A549 (cell line): ENCODE measurements at regions of chr16 and their contacts with region 1.

Region 1: GRCh38 chr16:66954097-66954659 is 6.9 kb upstream of the CES3 start:
- DNase-seq: peak; percentile 81 to 90
- ATAC-seq: peak; percentile 93 to 96
- H3K4me3 ChIP-seq: no peak overlapping the region
- H3K27ac ChIP-seq: peak overlapping the region; percentile 26 to 38; a peak in 3 of 6 replicates
- H3K4me1 ChIP-seq: peaks cover 8% of the 10 kb centered on the region; the same call in 2 of the 3 replicates
- CTCF ChIP-seq: peak; percentile 89
- EP300 ChIP-seq: no peak
- POLR2A ChIP-seq: no peak
- RAD21 ChIP-seq: peak; percentile 89 to 90

Region 2: GRCh38 chr16:66940226-66940625 is 14.0 kb before region 1 on chr16:
- CTCF ChIA-PET with region 1: interaction called, 20 read pairs
- POLR2A ChIA-PET with region 1: interaction called, 3 read pairs
- DNase-seq: no peak
- ATAC-seq: no peak
- H3K4me3 ChIP-seq: no peak overlapping the region
- H3K27ac ChIP-seq: no peak overlapping the region
- H3K4me1 ChIP-seq: peaks cover 12% of the 10 kb centered on the region; the same call in 2 of the 3 replicates
- CTCF ChIP-seq: no peak
- EP300 ChIP-seq: no peak
- POLR2A ChIP-seq: no peak
- RAD21 ChIP-seq: no peak

Region 3: DNA sequence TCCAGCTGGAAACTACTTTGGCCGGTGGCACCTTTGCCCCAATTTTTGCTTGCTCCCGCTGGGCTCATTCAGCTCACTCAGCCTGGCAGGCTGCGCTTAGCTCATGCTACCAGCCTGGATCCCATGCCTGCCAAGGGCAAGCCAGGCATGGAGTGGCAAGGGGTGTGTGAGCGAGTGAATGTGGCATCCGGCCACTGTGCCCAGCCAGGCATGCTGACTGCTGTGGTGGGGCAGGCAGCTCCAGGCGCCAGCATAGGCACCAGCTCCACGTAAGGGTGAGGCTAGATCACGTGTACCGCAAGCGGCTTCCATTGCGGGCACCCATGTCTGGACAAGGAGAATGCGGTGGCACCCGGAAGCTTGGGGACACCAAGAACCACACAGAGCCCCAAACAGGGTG is 187.2 kb after region 1 on chr16:
- CTCF ChIA-PET with region 1: interaction called, 11 read pairs
- POLR2A ChIA-PET with region 1: no interaction called
- DNase-seq: no peak
- ATAC-seq: no peak
- H3K4me3 ChIP-seq: no peak overlapping the region
- H3K27ac ChIP-seq: no peak overlapping the region
- H3K4me1 ChIP-seq: no peaks in the 10 kb centered on the region
- CTCF ChIP-seq: no peak
- EP300 ChIP-seq: no peak
- POLR2A ChIP-seq: no peak
- RAD21 ChIP-seq: no peak

Region 4: DNA sequence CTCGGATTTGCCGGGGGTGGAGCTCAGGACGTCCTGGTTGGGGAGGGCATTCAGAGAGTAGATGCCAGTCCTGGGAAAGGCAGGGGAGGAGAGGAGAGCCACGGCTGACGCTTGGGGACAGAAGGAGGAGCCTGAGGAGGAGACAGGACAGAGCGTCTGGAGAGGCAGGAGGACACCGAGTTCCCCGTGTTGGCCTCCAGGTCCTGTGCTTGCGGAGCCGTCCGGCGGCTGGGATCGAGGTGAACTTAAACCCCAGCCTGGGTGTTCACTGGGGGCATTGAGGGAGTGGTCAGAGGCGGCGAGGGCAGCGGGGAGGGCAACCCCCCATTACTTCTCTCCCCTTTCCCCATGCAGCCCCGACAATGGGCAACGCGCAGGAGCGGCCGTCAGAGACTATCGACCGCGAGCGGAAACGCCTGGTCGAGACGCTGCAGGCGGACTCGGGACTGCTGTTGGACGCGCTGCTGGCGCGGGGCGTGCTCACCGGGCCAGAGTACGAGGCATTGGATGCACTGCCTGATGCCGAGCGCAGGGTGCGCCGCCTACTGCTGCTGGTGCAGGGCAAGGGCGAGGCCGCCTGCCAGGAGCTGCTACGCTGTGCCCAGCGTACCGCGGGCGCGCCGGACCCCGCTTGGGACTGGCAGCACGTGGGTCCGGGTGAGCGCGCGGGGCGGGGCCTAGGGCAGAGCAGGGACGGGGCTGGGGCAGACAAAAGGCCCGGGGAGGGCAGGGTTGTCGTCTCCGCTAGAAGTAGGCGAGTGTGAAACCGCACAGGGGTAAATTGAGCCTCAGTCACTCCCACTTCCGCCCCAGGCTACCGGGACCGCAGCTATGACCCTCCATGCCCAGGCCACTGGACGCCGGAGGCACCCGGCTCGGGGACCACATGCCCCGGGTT is 219.9 kb after region 1 on chr16:
- CTCF ChIA-PET with region 1: interaction called, 25 read pairs
- POLR2A ChIA-PET with region 1: no interaction called
- DNase-seq: peak; percentile 89 to 91
- ATAC-seq: peak; percentile 59 to 82
- H3K4me3 ChIP-seq: peak overlapping the region; percentile 50
- H3K27ac ChIP-seq: peak overlapping the region; percentile 84 to 87
- H3K4me1 ChIP-seq: peaks cover 45% of the 10 kb centered on the region
- CTCF ChIP-seq: peak; percentile 26; the same call in 1 of the 3 replicates
- EP300 ChIP-seq: no peak
- POLR2A ChIP-seq: peak; percentile 62
- RAD21 ChIP-seq: peak in 1 of 2 experiments; percentile 28; a peak in 2 of 5 replicates

Region 5: GRCh38 chr16:67183627-67184328 is 229.6 kb after region 1 on chr16 and contains the start of gene MATCAP1:
- CTCF ChIA-PET with region 1: interaction called, 14 read pairs
- POLR2A ChIA-PET with region 1: no interaction called
- DNase-seq: peak; percentile 98 to 99
- ATAC-seq: peak; percentile 72 to 87
- H3K4me3 ChIP-seq: peak within 1 kb of the TSS; percentile 66
- H3K27ac ChIP-seq: peak within 1 kb of the TSS; percentile 93 to 97
- H3K4me1 ChIP-seq: peaks cover 34% of the 10 kb centered on the region
- CTCF ChIP-seq: no peak
- EP300 ChIP-seq: no peak
- POLR2A ChIP-seq: peak; percentile 45
- RAD21 ChIP-seq: no peak
- polyA plus RNA-seq, gene MATCAP1: 7.2 and 7.5 TPM in 2 replicates